GM10248 (cell line): ENCODE measurements at regions of chr10 and their contacts with region 1.

Region 1: DNA sequence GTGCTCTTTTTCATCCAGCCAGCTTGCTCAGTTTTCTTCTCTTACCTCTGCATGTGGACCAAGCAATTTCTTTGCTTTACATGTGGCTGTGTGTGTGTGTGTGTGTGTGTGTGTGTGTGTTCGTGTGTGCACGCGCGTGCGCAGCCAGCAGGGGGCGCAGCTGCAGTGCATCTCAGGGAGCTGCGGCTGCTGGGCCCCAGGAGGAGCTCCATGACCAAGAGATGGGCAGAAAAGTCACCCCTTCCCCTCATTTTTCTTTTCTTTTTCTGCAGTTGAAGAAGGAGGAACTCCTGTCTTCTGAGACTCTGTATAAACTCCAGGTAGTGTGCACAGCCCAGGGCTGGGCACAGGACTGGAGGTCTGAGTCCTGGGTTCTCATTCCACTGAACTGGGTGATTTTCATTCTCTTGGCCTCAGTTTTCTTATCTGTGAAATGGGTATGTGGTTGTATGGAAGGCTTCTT is 41.8 kb downstream of the BLNK start:
- DNase-seq: peak; percentile 75
- CTCF ChIP-seq: peak; percentile 95

Region 2: DNA sequence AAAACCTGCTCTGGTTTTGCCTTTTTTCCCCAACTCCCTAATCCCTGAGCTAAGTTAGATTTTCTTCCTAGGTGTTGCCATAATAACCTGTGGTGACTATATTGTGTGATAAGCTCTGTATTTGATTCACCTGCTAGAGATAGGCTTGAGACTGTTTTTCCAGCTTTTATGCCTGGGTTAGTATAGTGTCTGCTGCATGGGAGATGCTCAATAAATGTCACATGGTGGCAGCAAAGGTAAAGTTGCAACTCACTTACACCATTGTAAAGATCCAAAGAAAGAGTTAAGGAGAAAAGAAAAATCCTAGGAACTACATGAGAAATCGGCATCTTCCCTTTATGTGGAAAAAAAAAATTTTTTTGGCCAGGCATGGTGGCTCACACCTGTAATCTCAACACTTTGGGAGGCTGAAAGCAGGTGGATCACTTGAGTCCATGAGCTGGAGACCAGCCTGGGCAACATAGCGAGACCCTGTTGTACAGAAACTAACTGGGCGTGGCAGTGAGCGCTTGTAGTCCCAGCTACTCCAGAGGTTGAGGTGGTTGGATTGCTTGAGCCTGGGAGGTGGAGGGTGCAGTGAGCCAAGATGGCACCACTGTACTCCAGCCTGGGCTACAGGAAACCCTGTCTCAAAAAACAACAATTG is 182.5 kb before region 1 on chr10:
- CTCF ChIA-PET with region 1: no interaction called
- POLR2A ChIA-PET with region 1: no interaction called
- DNase-seq: no peak
- CTCF ChIP-seq: peak; percentile 30

Region 3: GRCh38 chr10:96168546-96168945 is 61.1 kb before region 1 on chr10:
- CTCF ChIA-PET with region 1: interaction called, 10 read pairs
- POLR2A ChIA-PET with region 1: no interaction called
- DNase-seq: no peak
- CTCF ChIP-seq: no peak

Region 4: DNA sequence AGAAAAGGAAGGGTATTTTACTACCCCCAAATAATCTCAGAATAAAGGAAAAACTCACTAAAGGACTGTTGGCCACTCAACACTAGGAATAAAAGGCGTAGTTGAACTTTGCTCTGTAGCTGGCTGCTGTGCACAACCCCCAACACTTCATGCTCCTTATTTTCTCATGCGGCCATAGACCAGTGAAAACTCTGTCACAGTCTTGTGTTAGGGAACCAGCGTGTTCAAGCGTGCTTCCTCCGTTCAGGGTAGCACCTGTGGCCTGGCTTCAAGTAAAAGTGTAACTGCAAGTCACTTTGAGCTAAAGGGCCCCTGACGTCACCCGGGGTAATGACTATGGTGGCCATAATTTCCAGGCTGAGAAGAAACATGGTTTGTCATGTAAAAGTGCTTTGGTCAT is 14.8 kb after region 1 on chr10:
- CTCF ChIA-PET with region 1: interaction called, 65 read pairs
- POLR2A ChIA-PET with region 1: no interaction called
- DNase-seq: peak; percentile 72
- CTCF ChIP-seq: no peak

Region 5: DNA sequence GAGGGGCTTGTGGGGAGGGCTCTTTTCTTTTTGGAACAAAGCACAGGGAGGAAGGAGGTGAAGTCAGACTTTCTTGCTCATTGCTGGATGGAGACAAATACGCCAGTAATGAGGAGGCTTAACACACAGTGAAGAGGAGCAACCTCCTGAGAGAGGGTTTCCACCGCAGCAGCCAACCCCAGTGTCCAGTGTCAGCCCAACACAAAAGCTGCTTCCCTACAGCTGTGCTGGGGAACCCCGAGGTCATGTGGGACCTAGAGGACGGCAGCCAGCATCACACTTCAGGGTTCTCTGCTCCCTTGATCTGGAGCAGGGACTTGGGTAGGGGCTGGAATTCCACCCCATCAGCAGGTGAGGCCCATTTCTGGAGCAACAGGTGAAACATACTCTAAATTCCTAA is 34.1 kb after region 1 on chr10:
- CTCF ChIA-PET with region 1: interaction called, 42 read pairs
- POLR2A ChIA-PET with region 1: interaction called, 3 read pairs
- DNase-seq: no peak
- CTCF ChIP-seq: no peak

Region 6: DNA sequence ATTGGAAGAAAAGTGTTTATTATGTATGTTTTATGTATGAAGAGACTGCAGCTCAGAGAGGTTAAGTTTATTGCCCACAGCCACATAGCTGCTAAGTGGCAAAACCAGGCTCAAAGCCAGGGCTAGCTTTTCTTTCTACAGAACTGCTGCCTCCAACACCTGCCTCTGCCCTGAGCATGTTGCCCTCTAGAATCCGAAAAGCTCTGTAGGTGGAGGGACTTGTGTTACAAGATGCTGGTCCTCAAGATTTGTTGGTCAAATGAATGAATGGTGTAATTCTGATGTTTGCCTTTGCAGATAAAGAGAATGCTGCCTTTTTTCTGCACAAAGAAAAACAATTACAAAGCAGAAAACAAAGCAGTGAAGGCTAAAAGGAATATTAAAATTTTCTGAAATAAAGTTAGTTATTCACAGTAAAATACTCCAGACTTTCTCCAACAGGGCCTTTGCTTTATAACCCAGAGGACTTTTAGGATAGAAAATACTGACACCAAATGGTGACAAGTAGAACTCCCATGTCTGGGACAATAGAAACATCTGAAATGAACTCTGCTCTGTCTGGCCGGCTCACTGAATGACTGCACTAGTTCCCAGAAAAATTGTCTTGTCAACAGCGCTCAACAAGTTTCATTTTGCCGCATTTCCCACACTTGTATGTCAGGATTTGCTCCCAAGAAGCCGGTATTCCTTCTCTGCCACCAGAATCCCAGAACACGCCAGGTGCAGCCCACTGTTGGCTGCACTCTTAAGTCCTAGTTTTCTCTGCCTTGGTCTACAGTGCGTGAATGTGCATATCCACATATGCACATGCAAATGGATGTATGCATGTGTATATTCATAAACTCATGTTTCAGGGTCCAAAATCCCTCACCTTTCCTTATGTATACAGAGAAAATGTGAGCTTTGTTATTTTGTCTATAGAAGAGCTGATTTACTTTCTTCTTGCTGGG is 63.6 kb after region 1 on chr10:
- CTCF ChIA-PET with region 1: interaction called, 548 read pairs
- POLR2A ChIA-PET with region 1: interaction called, 3 read pairs
- DNase-seq: peak; percentile 49
- CTCF ChIP-seq: peak; percentile 63

Region 7: GRCh38 chr10:96339957-96340904 is 110.6 kb after region 1 on chr10:
- CTCF ChIA-PET with region 1: interaction called, 75 read pairs
- POLR2A ChIA-PET with region 1: interaction called, 5 read pairs
- DNase-seq: peak; percentile 60
- CTCF ChIP-seq: peak; percentile 94